ENCODE measurements at regions of chr17 and their contacts with region 1.

Region 1: GRCh38 chr17:49707608-49708514 is at the start of gene SLC35B1:
- DNase-seq: peak; percentile 99
- H3K4me3 ChIP-seq: peak within 1 kb of the TSS; percentile 82 to 100 (median 95)
- H3K27ac ChIP-seq: peak within 1 kb of the TSS; percentile 90 to 98 (median 94)
- H3K4me1 ChIP-seq: peaks cover 14 to 83% (median 40%) of the 10 kb centered on the region in 6 donors
- H3K27me3 ChIP-seq: no peaks in the 10 kb centered on the region
- CTCF ChIP-seq: peak; percentile 45 to 90 (median 75)
- POLR2A ChIP-seq: peak in 2 of 3 donors; percentile 5 to 91
- total RNA-seq, gene SLC35B1: 37.0 to 69.9 (median 48.5) TPM

Region 2: DNA sequence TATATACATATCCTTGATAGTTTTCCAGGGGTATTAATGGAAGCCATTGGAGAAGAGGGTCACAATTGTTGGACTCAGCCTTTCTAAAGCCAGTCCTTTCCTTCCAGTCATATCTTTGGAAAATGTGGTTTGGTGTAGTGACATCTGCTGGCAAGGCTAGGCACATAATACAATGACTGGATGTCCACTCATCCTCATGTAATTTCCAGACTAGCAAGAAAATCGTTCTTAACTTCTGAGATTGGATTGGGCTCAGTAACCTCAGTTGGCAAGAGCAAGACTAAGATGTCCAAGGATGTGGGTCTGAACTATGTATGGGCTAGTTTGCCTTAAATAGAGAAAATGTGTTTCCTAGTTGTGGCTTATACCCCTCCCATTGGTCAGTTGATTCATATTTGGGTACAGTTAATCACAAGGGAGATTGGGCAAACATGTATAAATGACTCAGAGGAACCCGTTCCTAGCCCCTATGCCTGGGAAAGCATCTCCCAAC is 71.9 kb after region 1 on chr17:
- intact Hi-C with region 1: loop called (anchors 5 kb)
- DNase-seq: no peak
- H3K4me3 ChIP-seq: no peak overlapping the region
- H3K27ac ChIP-seq: peak overlapping the region in 3 of 8 donors; percentile 0 to 30 (median 22)
- H3K4me1 ChIP-seq: peaks cover 14 to 63% (median 37%) of the 10 kb centered on the region in 6 donors
- H3K27me3 ChIP-seq: no peaks in the 10 kb centered on the region
- CTCF ChIP-seq: peak; percentile 49 to 76 (median 67)
- POLR2A ChIP-seq: no peak

Region 3: GRCh38 chr17:49851387-49852291 is 143.8 kb after region 1 on chr17:
- intact Hi-C with region 1: loop called (anchors 10 kb)
- DNase-seq: peak; percentile 91
- H3K4me3 ChIP-seq: peak overlapping the region; percentile 45 to 75 (median 54)
- H3K27ac ChIP-seq: peak overlapping the region; percentile 35 to 74 (median 56)
- H3K4me1 ChIP-seq: peaks cover 8 to 32% (median 16%) of the 10 kb centered on the region in 6 donors
- H3K27me3 ChIP-seq: peaks cover 0 to 16% (median 0%) of the 10 kb centered on the region in 7 donors
- CTCF ChIP-seq: peak; percentile 41 to 84 (median 71)
- POLR2A ChIP-seq: no peak